HCT116 (cell line): ENCODE measurements at regions of chr2 and their contacts with region 1.

Region 1: GRCh38 chr2:217756375-217757107 is 246.3 kb downstream of the TNS1 start:
- DNase-seq: peak; percentile 40
- ATAC-seq: peak; percentile 97
- H3K4me3 ChIP-seq: peak overlapping the region; percentile 19 to 31
- H3K27ac ChIP-seq: no peak overlapping the region
- H3K4me1 ChIP-seq: peaks cover 0 to 9% of the 10 kb centered on the region in 2 experiments; a peak in 1 of 4 replicates
- H3K27me3 ChIP-seq: peaks cover 27% of the 10 kb centered on the region
- CTCF ChIP-seq: peak; percentile 68 to 95 (median 94)
- POLR2A ChIP-seq: peak; percentile 68
- RAD21 ChIP-seq: peak; percentile 88

Region 2: DNA sequence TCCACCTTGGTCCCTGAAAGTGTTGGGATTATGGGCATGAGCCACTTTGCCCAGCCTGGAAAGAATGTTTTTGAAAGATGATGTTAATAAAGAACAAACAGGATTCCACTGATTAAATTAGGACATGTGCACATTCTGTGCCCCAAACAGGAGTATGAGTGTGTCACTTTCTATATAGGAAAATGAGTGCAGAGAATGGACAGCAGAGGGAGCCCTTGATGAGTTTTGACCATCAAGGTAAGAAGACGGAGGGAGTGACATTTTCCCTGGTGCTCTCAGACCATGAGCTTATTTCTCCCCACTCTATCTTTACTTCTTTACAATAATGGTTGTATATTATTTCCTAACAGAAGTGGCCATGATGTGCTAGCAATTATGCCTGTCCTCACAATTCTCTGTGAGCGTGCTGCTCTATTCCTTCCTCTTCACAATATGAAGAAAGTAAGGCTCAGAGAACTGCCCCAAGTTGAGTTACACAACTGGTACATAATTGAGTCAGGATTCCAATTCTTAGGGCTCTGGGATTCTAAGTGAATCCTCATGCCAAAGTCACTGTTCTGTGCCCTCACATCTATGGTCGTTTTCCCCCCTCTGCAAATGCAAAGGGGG is 1237.3 kb before region 1 on chr2:
- CTCF ChIA-PET with region 1: no interaction called
- POLR2A ChIA-PET with region 1: no interaction called
- RAD21 ChIA-PET with region 1: no interaction called
- intact Hi-C with region 1: loop called (anchors 1 kb)
- DNase-seq: peak; percentile 67
- ATAC-seq: peak; percentile 88
- H3K4me3 ChIP-seq: no peak overlapping the region
- H3K27ac ChIP-seq: no peak overlapping the region
- H3K4me1 ChIP-seq: no peaks in the 10 kb centered on the region
- H3K27me3 ChIP-seq: no peaks in the 10 kb centered on the region
- CTCF ChIP-seq: peak; percentile 67 to 80 (median 76); a peak in 5 of 6 replicates
- POLR2A ChIP-seq: no peak
- RAD21 ChIP-seq: peak; percentile 80

Region 3: GRCh38 chr2:216555274-216555673 is 1201.3 kb before region 1 on chr2:
- CTCF ChIA-PET with region 1: no interaction called
- POLR2A ChIA-PET with region 1: no interaction called
- RAD21 ChIA-PET with region 1: no interaction called
- intact Hi-C with region 1: no loop called
- DNase-seq: no peak
- ATAC-seq: no peak
- H3K4me3 ChIP-seq: no peak overlapping the region
- H3K27ac ChIP-seq: no peak overlapping the region
- H3K4me1 ChIP-seq: peaks cover 4 to 9% of the 10 kb centered on the region in 2 experiments; a peak in 2 of 4 replicates
- H3K27me3 ChIP-seq: no peaks in the 10 kb centered on the region
- CTCF ChIP-seq: no peak
- POLR2A ChIP-seq: no peak
- RAD21 ChIP-seq: no peak

Region 4: DNA sequence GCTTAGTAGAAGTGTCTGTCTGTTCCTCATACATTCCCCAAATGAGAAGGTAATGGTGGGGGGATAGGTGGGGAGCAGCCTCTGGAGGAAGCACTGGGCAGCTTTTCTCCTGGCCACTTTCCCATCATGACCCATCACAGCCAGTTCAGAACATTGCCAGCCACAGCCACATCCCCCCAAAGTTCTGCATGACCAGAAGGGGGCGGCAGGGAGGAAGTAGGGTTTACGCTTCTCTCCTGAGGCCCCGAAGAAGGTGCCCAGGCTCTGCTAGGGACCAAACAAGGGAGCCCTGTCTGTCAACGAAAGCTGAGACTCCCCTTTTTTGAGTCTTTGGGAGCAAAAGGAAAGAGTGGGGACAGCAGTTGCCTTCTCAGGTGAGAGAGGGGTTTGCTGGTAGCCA is 1068.9 kb before region 1 on chr2:
- CTCF ChIA-PET with region 1: interaction called, 4 read pairs
- POLR2A ChIA-PET with region 1: no interaction called
- RAD21 ChIA-PET with region 1: no interaction called
- intact Hi-C with region 1: loop called (anchors 2 kb)
- DNase-seq: peak; percentile 26
- ATAC-seq: peak; percentile 72
- H3K4me3 ChIP-seq: no peak overlapping the region
- H3K27ac ChIP-seq: no peak overlapping the region
- H3K4me1 ChIP-seq: peaks cover 0 to 27% of the 10 kb centered on the region in 2 experiments; a peak in 2 of 4 replicates
- H3K27me3 ChIP-seq: no peaks in the 10 kb centered on the region
- CTCF ChIP-seq: peak; percentile 40 to 87 (median 64); a peak in 5 of 6 replicates
- POLR2A ChIP-seq: no peak
- RAD21 ChIP-seq: peak; percentile 48

Region 5: GRCh38 chr2:217650716-217651360 is 105.7 kb before region 1 on chr2:
- CTCF ChIA-PET with region 1: interaction called, 5 read pairs
- POLR2A ChIA-PET with region 1: no interaction called
- RAD21 ChIA-PET with region 1: no interaction called
- intact Hi-C with region 1: loop called (anchors 5 kb)
- DNase-seq: peak; percentile 60
- ATAC-seq: peak; percentile 87
- H3K4me3 ChIP-seq: no peak overlapping the region
- H3K27ac ChIP-seq: no peak overlapping the region
- H3K4me1 ChIP-seq: peaks cover 7 to 21% of the 10 kb centered on the region in 2 experiments; a peak in 3 of 4 replicates
- H3K27me3 ChIP-seq: no peaks in the 10 kb centered on the region
- CTCF ChIP-seq: peak; percentile 57 to 93 (median 82); a peak in 5 of 6 replicates
- POLR2A ChIP-seq: no peak
- RAD21 ChIP-seq: peak; percentile 60